T-cell (primary cell): ENCODE measurements at regions of chr5 and their contacts with region 1.

Region 1: DNA sequence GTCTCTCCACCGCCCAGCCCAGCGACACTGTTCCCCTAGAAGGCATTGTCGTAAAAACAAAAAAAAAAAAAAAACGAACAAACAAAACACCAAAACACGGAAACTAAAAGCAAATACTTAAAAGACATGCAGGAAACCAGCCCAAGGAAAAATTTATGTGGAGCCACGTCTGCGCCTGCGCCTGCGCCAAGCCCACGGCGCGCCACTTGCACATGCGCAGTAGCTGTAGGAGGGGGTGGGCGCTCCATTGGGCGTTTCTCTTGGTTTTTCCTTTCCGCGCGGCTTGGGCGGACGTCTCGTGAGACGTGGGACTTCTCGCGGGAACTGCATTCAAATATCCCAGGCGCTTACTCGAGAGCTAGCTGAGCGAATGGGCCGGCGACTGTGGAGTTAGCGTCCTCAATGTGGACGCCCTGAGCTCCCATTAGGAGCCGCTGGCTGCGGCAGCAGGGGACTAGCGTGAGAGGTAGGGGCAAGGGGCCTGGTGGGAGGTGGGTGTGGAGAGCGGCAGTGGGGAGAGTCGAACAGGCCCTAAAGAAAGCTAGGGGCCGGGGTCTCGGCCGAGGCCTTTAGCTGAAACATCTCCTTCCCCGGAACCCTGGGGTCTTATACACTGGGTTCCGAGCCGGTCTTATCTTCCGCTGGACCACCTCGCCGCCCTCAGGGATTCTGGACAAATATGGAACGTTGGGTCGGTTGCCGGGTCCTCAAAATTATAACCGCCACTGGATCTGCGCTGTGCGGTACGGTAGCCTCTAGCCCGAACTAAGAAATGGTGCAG is at the start of gene SPDL1:
- DNase-seq: peak; percentile 87 to 98 (median 91)
- ATAC-seq: peak; percentile 96 to 98 (median 97)
- H3K4me3 ChIP-seq: peak within 1 kb of the TSS; percentile 80 to 93
- H3K4me3 Mint-ChIP-seq: peak within 1 kb of the TSS; percentile 95 to 98 (median 97)
- H3K27ac ChIP-seq: peak within 1 kb of the TSS; percentile 60
- H3K27ac Mint-ChIP-seq: peak within 1 kb of the TSS; percentile 96 to 98
- H3K4me1 ChIP-seq: peaks cover 10 to 11% of the 10 kb centered on the region in 2 experiments
- H3K4me1 Mint-ChIP-seq: peaks cover 27 to 39% (median 39%) of the 10 kb centered on the region in 3 donors
- H3K27me3 ChIP-seq: no peaks in the 10 kb centered on the region
- H3K27me3 Mint-ChIP-seq: no peaks in the 10 kb centered on the region
- total RNA-seq, gene SPDL1: 3.2 to 13.8 (median 11.9) TPM

Region 2: GRCh38 chr5:169637085-169637548 is 53.5 kb after region 1 on chr5 and contains the start of gene DOCK2:
- CTCF ChIA-PET with region 1: interaction called in 1 of 2 experiments, 14 read pairs
- POLR2A ChIA-PET with region 1: interaction called in 1 of 2 experiments, 6 read pairs
- DNase-seq: peak; percentile 43 to 79 (median 59)
- ATAC-seq: peak; percentile 82 to 86 (median 83)
- H3K4me3 ChIP-seq: peak within 1 kb of the TSS; percentile 85 to 89
- H3K4me3 Mint-ChIP-seq: peak within 1 kb of the TSS; percentile 90 to 96 (median 90)
- H3K27ac ChIP-seq: peak within 1 kb of the TSS; percentile 87
- H3K27ac Mint-ChIP-seq: peak within 1 kb of the TSS; percentile 90 to 95
- H3K4me1 ChIP-seq: peaks cover 7 to 39% of the 10 kb centered on the region in 2 experiments
- H3K4me1 Mint-ChIP-seq: peaks cover 52 to 56% (median 53%) of the 10 kb centered on the region in 3 donors
- H3K27me3 ChIP-seq: no peaks in the 10 kb centered on the region
- H3K27me3 Mint-ChIP-seq: no peaks in the 10 kb centered on the region
- total RNA-seq, gene DOCK2: 168 to 303 (median 197) TPM

Region 3: DNA sequence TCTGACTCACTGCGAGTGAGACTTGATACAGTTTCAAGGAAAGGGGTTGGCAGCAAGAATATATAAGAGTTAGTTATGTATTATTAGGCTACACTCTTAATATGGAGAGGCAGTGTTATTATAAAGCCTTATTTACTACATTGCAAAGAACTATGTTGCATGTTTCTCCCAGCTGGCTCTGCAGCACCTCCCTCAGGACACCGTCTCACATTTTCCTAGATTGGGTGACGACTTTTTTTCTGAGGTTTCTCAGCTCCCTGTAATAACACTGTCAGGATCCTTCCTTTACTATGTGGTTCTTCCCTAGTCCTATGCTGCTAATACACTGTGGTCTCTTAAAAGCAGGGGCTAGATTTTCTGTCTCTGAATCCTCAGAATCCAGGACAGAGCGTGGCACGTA is 243.0 kb after region 1 on chr5:
- CTCF ChIA-PET with region 1: no interaction called
- POLR2A ChIA-PET with region 1: interaction called in 1 of 2 experiments, 11 read pairs
- DNase-seq: no peak
- ATAC-seq: no peak
- H3K4me3 ChIP-seq: no peak overlapping the region
- H3K4me3 Mint-ChIP-seq: no peak overlapping the region
- H3K27ac ChIP-seq: no peak overlapping the region
- H3K27ac Mint-ChIP-seq: no peak overlapping the region
- H3K4me1 ChIP-seq: no peaks in the 10 kb centered on the region
- H3K4me1 Mint-ChIP-seq: peaks cover 0 to 12% (median 9%) of the 10 kb centered on the region in 3 donors
- H3K27me3 ChIP-seq: no peaks in the 10 kb centered on the region
- H3K27me3 Mint-ChIP-seq: no peaks in the 10 kb centered on the region